Natural killer cell (primary cell): ENCODE measurements at regions of chr15 and their contacts with region 1.

Region 1: DNA sequence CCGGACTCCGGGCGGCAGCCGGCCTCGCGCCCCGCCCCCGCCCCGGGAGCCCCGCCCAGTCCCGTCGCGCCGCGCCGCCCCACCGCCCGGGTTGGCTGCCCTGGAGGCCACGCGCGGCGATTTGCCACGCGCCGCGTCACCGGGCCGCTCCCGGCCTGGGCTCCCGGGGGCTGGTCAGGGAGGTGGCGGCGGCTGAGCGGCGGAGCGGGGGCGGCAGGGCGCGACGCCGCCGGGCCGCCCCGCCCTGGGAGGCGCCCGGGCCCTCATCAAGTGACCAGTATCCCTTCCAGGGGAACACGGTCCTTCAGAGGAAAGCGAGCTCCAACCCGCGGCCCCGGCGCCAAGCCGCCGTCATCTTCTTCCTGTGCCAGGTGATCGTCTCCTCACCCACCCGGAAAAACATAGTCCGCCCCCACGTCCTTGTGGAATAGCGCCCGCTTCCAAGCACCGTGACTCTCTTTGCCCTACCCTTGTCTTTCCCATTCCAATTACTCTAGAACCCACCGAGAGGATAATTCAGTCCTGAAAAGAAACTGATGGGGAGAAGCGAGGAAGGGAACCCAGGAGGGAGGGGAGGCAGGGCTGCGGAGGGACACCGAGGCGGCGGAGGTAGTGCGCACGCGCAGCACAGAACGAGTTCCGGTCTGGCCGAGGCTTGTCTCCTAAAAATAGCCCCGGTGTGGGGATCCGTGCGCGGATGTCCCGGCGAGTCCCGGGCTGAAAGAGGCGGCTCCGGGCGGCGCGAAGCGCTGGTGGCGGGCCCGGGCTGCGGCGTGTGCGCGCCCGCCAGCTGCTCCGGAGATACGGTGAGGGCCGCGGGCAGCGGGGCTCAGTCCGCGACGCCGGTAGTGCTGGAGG is at the start of gene MEF2A:
- DNase-seq: peak; percentile 88 to 96
- ATAC-seq: peak; percentile 75 to 90 (median 83)
- H3K4me3 ChIP-seq: peak within 1 kb of the TSS; percentile 96
- H3K4me3 Mint-ChIP-seq: peak within 1 kb of the TSS; percentile 98
- H3K27ac ChIP-seq: peak within 1 kb of the TSS; percentile 96
- H3K27ac Mint-ChIP-seq: peak within 1 kb of the TSS; percentile 90 to 93
- H3K4me1 ChIP-seq: peaks cover 20% of the 10 kb centered on the region
- H3K4me1 Mint-ChIP-seq: peaks cover 27 to 29% of the 10 kb centered on the region in 2 donors
- H3K27me3 ChIP-seq: no peaks in the 10 kb centered on the region
- H3K27me3 Mint-ChIP-seq: peaks cover 0 to 6% of the 10 kb centered on the region in 2 donors
- CTCF ChIP-seq: no peak
- total RNA-seq, gene MEF2A: 31.1 to 33.9 (median 33.6) TPM

Region 2: GRCh38 chr15:98753726-98754671 is 811.5 kb before region 1 on chr15:
- intact Hi-C with region 1: no loop called
- DNase-seq: no peak
- ATAC-seq: no peak
- H3K4me3 ChIP-seq: no peak overlapping the region
- H3K4me3 Mint-ChIP-seq: no peak overlapping the region
- H3K27ac ChIP-seq: no peak overlapping the region
- H3K27ac Mint-ChIP-seq: no peak overlapping the region
- H3K4me1 ChIP-seq: no peaks in the 10 kb centered on the region
- H3K4me1 Mint-ChIP-seq: peaks cover 29% of the 10 kb centered on the region in 2 donors
- H3K27me3 ChIP-seq: no peaks in the 10 kb centered on the region
- H3K27me3 Mint-ChIP-seq: no peaks in the 10 kb centered on the region
- CTCF ChIP-seq: no peak

Region 3: DNA sequence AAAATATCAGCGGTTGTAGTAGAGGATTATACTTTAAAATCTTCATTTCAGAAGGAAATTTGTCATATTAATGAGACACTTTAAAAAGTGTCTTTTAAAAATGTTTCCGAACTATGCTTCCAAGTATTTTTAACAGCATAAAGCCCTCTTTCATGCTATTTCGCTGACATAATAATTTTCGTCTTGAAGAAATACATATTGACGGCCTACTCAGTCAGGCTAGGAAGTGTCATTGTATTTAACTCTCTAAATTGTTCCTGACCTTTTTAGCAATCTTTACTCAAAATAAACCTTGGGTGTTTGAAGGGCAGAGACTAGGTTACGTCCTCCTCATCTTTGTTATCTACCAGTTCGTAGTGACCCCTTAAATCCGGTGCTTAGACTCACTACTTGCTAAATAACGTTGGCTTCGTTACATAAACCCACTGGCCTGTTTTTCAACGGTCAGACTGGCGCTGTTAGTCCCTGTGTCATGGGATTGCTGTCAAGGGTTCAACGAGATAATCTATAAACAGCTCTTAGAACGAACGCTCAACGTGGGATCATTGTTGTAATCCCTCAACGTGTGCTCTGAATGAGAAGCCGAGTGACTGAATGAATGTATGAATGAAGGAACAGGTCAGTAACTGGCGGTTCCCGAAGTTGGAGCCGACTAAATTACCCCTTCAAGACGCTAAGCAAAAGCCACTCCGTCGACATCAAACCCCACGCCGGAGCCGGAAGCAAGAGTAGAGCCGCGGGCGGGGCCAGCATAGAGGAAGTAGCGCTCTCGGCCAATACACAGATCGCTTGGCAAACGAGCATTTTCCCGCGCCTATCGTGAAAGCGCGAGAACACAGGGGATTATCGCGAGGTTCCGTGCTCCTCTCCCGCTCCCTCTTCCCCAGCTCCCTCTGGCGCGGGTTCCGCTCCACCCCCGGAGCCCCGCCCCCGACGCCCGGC is 314.8 kb before region 1 on chr15:
- intact Hi-C with region 1: loop called (anchors 5 kb)
- DNase-seq: peak; percentile 85 to 98
- ATAC-seq: peak; percentile 96 to 98 (median 97)
- H3K4me3 ChIP-seq: peak overlapping the region; percentile 61
- H3K4me3 Mint-ChIP-seq: peak overlapping the region; percentile 95
- H3K27ac ChIP-seq: peak overlapping the region; percentile 76
- H3K27ac Mint-ChIP-seq: peak overlapping the region; percentile 86 to 90
- H3K4me1 ChIP-seq: peaks cover 14% of the 10 kb centered on the region
- H3K4me1 Mint-ChIP-seq: peaks cover 22 to 26% of the 10 kb centered on the region in 2 donors
- H3K27me3 ChIP-seq: no peaks in the 10 kb centered on the region
- H3K27me3 Mint-ChIP-seq: peaks cover 0 to 2% of the 10 kb centered on the region in 2 donors
- CTCF ChIP-seq: no peak

Region 4: GRCh38 chr15:99507504-99508310 is 57.8 kb before region 1 on chr15:
- intact Hi-C with region 1: loop called (anchors 2 kb)
- DNase-seq: peak; percentile 24 to 54
- ATAC-seq: peak; percentile 76 to 94 (median 80)
- H3K4me3 ChIP-seq: no peak overlapping the region
- H3K4me3 Mint-ChIP-seq: peak overlapping the region; percentile 63
- H3K27ac ChIP-seq: peak overlapping the region; percentile 6
- H3K27ac Mint-ChIP-seq: peak overlapping the region in 1 of 2 donors; percentile 74
- H3K4me1 ChIP-seq: peaks cover 78% of the 10 kb centered on the region
- H3K4me1 Mint-ChIP-seq: peaks cover 50 to 59% of the 10 kb centered on the region in 2 donors
- H3K27me3 ChIP-seq: no peaks in the 10 kb centered on the region
- H3K27me3 Mint-ChIP-seq: peaks cover 14 to 41% of the 10 kb centered on the region in 2 donors
- CTCF ChIP-seq: no peak

Region 5: GRCh38 chr15:99590913-99591646 is 25.6 kb after region 1 on chr15:
- intact Hi-C with region 1: no loop called
- DNase-seq: no peak
- ATAC-seq: no peak
- H3K4me3 ChIP-seq: no peak overlapping the region
- H3K4me3 Mint-ChIP-seq: no peak overlapping the region
- H3K27ac ChIP-seq: no peak overlapping the region
- H3K27ac Mint-ChIP-seq: peak overlapping the region in 1 of 2 donors; percentile 70
- H3K4me1 ChIP-seq: no peaks in the 10 kb centered on the region
- H3K4me1 Mint-ChIP-seq: peaks cover 54 to 60% of the 10 kb centered on the region in 2 donors
- H3K27me3 ChIP-seq: no peaks in the 10 kb centered on the region
- H3K27me3 Mint-ChIP-seq: no peaks in the 10 kb centered on the region
- CTCF ChIP-seq: no peak